ENCODE measurements at regions of chr9 and their contacts with region 1.

Region 1: GRCh38 chr9:121267689-121268597 is at the start of gene GSN:
- DNase-seq: no peak
- ATAC-seq: peak; percentile 88
- H3K4me3 ChIP-seq: peak within 1 kb of the TSS; percentile 67 to 76
- H3K27ac ChIP-seq: peak within 1 kb of the TSS; percentile 88
- H3K4me1 ChIP-seq: peaks cover 34% of the 10 kb centered on the region
- H3K27me3 ChIP-seq: no peaks in the 10 kb centered on the region
- CTCF ChIP-seq: no peak
- total RNA-seq, gene GSN: 278 TPM

Region 2: DNA sequence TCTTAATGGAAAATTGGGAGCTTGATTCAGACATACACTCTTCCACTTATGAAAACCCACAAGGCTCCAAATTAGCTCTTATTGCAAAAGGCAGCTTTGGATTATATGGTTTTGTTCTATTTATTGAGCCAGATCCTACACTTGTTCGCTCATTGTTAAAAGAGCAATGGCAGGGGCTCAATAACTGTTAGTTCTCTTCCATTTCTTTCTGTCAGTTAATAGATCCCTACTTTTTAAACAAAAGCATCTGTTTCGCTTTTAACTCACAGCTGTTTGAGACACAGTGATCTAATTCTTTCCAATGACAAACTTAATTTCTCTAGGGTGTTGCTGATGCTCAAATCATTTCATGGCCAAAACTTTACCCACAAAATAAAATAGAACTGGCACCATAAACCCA is 229.6 kb before region 1 on chr9:
- CTCF ChIA-PET with region 1: no interaction called
- POLR2A ChIA-PET with region 1: no interaction called
- in situ Hi-C with region 1: no loop called
- intact Hi-C with region 1: no loop called
- DNase-seq: no peak
- ATAC-seq: no peak
- H3K4me3 ChIP-seq: no peak overlapping the region
- H3K27ac ChIP-seq: no peak overlapping the region
- H3K4me1 ChIP-seq: no peaks in the 10 kb centered on the region
- H3K27me3 ChIP-seq: no peaks in the 10 kb centered on the region
- CTCF ChIP-seq: no peak

Region 3: DNA sequence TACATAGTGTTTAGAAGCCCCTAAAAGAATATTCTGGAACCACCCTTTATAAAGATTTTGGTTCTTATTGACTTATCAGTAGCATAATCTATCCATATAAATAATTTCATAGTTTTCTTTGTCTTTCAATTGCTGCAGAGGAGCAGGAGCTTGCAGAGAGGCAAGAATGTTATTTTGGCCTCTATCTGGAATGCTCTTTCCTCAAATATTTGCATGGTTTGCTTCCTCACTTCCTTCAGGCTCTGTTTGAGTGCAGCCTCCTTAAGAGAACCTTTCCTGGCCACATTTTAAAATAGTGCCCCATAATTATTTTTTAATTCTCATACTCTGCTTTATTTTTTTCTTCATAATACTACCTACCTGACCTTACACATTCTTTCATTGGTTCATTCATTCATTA is 219.3 kb before region 1 on chr9:
- CTCF ChIA-PET with region 1: no interaction called
- POLR2A ChIA-PET with region 1: no interaction called
- in situ Hi-C with region 1: no loop called
- intact Hi-C with region 1: no loop called
- DNase-seq: no peak
- ATAC-seq: no peak
- H3K4me3 ChIP-seq: no peak overlapping the region
- H3K27ac ChIP-seq: no peak overlapping the region
- H3K4me1 ChIP-seq: no peaks in the 10 kb centered on the region
- H3K27me3 ChIP-seq: no peaks in the 10 kb centered on the region
- CTCF ChIP-seq: no peak

Region 4: DNA sequence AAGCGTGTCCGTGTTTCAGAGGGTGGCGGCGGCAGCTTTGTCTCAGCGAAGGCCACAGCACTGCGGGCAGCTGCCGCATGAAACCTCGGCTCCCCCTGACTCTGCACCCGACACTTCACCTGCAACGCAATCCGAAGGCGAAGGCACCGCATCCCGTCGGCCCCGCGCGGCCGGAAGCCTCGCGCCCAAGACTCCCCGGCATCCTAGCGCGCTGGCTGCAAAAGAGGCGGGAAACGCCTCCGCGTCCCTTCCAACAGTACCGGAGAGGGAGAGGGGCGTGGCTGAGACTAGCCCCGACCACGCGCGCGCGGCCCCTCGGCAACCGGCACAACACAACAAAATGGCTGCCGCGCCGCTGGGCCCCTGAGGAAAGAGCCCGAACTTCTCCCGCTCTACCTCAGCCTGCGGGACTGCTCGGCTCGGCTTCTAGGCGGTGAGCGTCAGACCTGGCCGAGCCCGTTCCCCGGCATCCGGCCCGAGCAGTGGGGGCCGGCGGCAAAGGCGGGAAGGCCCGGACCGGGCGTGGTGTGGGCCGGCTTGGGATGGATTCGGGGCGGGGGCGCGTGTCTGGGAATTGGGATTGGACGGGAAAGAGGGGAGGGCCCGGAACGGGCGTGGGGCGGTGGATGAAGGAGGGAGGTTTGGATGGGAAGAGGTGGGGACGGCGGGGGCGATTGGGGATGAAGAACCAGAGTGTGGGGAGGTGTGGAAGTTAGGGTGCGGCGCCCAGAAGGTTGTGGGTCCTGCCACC is 193.1 kb before region 1 on chr9 and contains the start of gene CNTRL:
- CTCF ChIA-PET with region 1: interaction called, 12 read pairs
- POLR2A ChIA-PET with region 1: no interaction called
- in situ Hi-C with region 1: no loop called
- intact Hi-C with region 1: no loop called
- DNase-seq: peak; percentile 64
- ATAC-seq: peak; percentile 94
- H3K4me3 ChIP-seq: peak within 1 kb of the TSS; percentile 68 to 85
- H3K27ac ChIP-seq: peak within 1 kb of the TSS; percentile 91
- H3K4me1 ChIP-seq: peaks cover 3% of the 10 kb centered on the region; the same call in 1 of the 2 replicates
- H3K27me3 ChIP-seq: no peaks in the 10 kb centered on the region
- CTCF ChIP-seq: no peak
- total RNA-seq, gene CNTRL: 11.5 TPM

Region 5: DNA sequence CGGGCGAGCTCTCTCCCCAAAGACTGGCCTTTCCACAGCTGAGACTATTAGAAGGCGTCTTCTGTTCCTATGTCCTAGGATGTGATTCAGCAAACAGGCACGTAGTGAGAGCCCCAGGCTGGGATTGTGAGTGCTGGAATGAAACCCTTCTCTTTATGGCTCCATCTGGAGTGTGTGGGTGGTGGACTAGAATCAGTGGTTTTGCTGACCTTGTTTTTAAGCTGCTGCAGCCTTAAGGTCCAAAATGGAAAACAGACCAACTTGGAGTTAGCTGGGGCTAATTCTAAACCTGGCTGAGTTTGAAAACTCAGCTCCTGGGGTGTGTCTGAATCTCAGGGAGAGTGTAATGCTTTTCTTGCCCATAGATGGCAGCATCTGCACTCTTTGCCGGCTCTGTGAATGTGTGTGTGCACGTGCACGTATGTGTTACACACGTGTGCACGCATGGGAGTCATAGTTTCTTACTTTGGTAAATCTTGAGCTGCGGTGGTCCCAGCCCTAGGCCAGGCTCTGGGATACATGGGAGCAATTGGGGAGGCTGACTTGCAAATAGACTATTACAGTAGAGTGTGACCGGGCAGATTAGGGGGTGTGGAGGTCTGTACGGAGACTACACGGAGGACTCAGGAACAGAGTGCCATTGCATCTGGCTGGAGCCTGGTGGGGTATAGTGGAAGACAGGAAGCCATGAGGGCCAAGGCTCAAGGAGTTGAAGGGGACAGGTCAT is 10.8 kb after region 1 on chr9:
- CTCF ChIA-PET with region 1: interaction called, 12 read pairs
- POLR2A ChIA-PET with region 1: interaction called, 3 read pairs
- in situ Hi-C with region 1: no loop called
- intact Hi-C with region 1: no loop called
- DNase-seq: no peak
- ATAC-seq: peak; percentile 79
- H3K4me3 ChIP-seq: peak overlapping the region; percentile 4; a peak in 1 of 4 replicates
- H3K27ac ChIP-seq: peak overlapping the region; percentile 99
- H3K4me1 ChIP-seq: peaks cover 90% of the 10 kb centered on the region
- H3K27me3 ChIP-seq: no peaks in the 10 kb centered on the region
- CTCF ChIP-seq: peak; percentile 85

Measured in Panc1 (cell line).